Activated naive CD8-positive, alpha-beta T cell treated with anti-CD3 and anti-CD28 coated beads, Interleukin-2, amount 10 ng/mL, durations not matched to agents 7 days and 5 days (primary cell): ENCODE measurements at regions of chr2 and their contacts with region 1.

Region 1: DNA sequence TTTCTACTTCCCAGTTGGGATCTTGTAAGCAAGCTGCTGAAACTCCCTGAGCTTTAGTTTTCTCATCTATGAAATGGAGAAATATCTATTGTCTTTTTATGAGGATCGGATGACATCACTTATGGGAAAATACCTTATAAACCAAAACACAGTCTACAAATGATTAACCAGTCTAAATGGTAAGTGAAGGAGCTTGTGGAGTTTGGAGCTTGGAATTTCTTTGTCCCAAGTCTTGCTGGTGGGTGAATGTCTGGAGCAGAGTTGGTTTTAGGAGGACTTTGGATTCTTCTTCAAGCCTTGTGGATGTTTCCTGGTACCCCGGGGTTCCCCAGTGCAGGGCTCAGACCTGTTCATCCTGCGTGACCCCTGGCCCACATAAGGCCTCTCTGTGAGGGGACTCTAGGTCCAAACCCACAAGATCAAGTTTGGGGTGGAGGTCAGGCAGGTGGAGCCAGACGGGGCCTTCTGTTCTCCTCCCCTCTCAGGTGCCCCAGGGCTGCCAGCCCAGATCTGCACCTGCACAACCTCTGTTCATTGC is 43.2 kb downstream of the FOSL2 start:
- DNase-seq: no peak
- ATAC-seq: no peak
- H3K4me3 Mint-ChIP-seq: no peak overlapping the region
- H3K27ac Mint-ChIP-seq: peak overlapping the region; percentile 30
- H3K4me1 Mint-ChIP-seq: peaks cover 57% of the 10 kb centered on the region
- H3K27me3 Mint-ChIP-seq: no peaks in the 10 kb centered on the region

Region 2: GRCh38 chr2:28408764-28409599 is 26.9 kb before region 1 on chr2:
- POLR2A ChIA-PET with region 1: interaction called, 10 read pairs
- DNase-seq: peak; percentile 75
- ATAC-seq: peak; percentile 69
- H3K4me3 Mint-ChIP-seq: peak overlapping the region; percentile 63
- H3K27ac Mint-ChIP-seq: peak overlapping the region; percentile 96
- H3K4me1 Mint-ChIP-seq: peaks cover 59% of the 10 kb centered on the region
- H3K27me3 Mint-ChIP-seq: no peaks in the 10 kb centered on the region

Region 3: GRCh38 chr2:28469304-28469703 is 33.4 kb after region 1 on chr2:
- POLR2A ChIA-PET with region 1: no interaction called
- DNase-seq: no peak
- ATAC-seq: no peak
- H3K4me3 Mint-ChIP-seq: no peak overlapping the region
- H3K27ac Mint-ChIP-seq: no peak overlapping the region
- H3K4me1 Mint-ChIP-seq: peaks cover 29% of the 10 kb centered on the region
- H3K27me3 Mint-ChIP-seq: peaks cover 7% of the 10 kb centered on the region

Region 4: DNA sequence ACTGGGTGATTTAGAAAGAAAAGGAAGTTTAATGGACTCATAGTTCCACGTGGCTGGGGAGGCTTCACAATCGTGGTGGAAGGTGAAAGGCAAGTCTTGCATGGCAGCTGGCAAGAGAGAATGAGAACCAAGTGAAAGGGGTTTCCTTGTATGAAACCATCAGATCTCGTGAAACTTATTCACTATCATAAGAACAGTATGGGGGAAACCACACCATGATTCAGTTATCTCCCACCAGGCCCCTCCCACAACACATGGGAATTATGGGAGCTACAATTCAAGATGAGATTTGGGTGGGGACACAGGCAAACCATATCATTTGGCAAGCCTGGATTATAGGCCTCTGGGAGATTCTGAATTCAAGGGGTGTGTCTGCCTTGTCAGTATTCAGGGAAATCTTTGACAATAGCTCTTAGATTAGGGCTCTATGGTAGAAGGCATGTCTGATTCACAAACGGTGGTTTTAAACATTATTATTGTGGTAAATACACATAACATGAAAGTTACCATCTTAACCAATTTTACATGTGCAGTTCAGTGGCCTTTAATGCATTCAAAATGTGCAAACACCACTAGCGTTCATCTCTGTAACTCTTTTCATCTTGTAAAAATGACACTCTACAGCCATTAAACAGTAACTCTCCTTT is 44.6 kb after region 1 on chr2:
- POLR2A ChIA-PET with region 1: no interaction called
- DNase-seq: no peak
- ATAC-seq: no peak
- H3K4me3 Mint-ChIP-seq: no peak overlapping the region
- H3K27ac Mint-ChIP-seq: no peak overlapping the region
- H3K4me1 Mint-ChIP-seq: no peaks in the 10 kb centered on the region
- H3K27me3 Mint-ChIP-seq: peaks cover 8% of the 10 kb centered on the region